Pancreas (tissue), 10 donors: ENCODE measurements at regions of chr17 and their contacts with region 1.

Region 1: GRCh38 chr17:80866147-80866793 is 125.4 kb upstream of the CHMP6 start:
- DNase-seq: peak in 4 of 6 donors; percentile 24 to 79 (median 56)
- ATAC-seq: peak; percentile 60 to 93 (median 89)
- H3K4me3 ChIP-seq: no peak overlapping the region
- H3K27ac ChIP-seq: no peak overlapping the region
- H3K4me1 ChIP-seq: no peaks in the 10 kb centered on the region
- H3K27me3 ChIP-seq: no peaks in the 10 kb centered on the region
- CTCF ChIP-seq: peak in 3 of 4 donors; percentile 35 to 53 (median 51)

Region 2: GRCh38 chr17:80732268-80732667 is 134.0 kb before region 1 on chr17:
- intact Hi-C with region 1: no loop called
- DNase-seq: no peak
- ATAC-seq: no peak
- H3K4me3 ChIP-seq: no peak overlapping the region
- H3K27ac ChIP-seq: no peak overlapping the region
- H3K4me1 ChIP-seq: no peaks in the 10 kb centered on the region
- H3K27me3 ChIP-seq: no peaks in the 10 kb centered on the region
- CTCF ChIP-seq: no peak

Region 3: DNA sequence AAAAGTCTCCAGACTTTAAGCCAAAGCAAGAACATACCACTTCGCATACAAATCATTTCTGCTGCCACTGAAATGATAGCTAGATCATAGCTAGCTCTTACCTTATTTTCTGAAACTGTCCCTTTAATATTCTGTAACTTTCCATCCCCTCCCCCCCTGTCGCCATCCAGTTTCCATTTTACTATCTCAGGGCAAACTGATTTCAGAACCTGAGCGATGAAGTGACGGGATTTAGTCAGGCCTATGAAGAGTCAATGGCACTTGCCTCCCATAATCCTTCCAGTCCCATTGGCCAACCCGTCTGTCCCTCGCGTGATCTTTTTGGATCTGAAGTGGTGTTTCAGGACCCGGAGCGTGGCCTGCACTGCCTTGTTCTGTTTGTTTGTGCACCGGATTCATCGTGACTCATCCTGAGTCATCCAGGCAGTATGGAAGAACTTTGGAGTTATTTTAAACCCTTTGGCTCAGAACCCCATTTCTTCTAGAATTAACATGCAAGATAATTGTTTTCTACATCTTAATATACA is 74.4 kb before region 1 on chr17:
- intact Hi-C with region 1: no loop called
- DNase-seq: peak in 1 of 6 donors; percentile 34
- ATAC-seq: peak in 3 of 4 donors; percentile 39 to 62 (median 53)
- H3K4me3 ChIP-seq: no peak overlapping the region
- H3K27ac ChIP-seq: peak overlapping the region in 1 of 4 donors; percentile 13
- H3K4me1 ChIP-seq: no peaks in the 10 kb centered on the region
- H3K27me3 ChIP-seq: no peaks in the 10 kb centered on the region
- CTCF ChIP-seq: no peak

Region 4: GRCh38 chr17:80970044-80970761 is 103.9 kb after region 1 on chr17:
- intact Hi-C with region 1: loop called in 1 of 3 experiments (anchors 10 kb)
- DNase-seq: peak in 1 of 6 donors; percentile 76
- ATAC-seq: peak in 3 of 4 donors; percentile 50 to 67 (median 53)
- H3K4me3 ChIP-seq: no peak overlapping the region
- H3K27ac ChIP-seq: no peak overlapping the region
- H3K4me1 ChIP-seq: peaks cover 3 to 9% (median 7%) of the 10 kb centered on the region in 3 donors
- H3K27me3 ChIP-seq: no peaks in the 10 kb centered on the region
- CTCF ChIP-seq: no peak

Region 5: GRCh38 chr17:81119223-81120148 is 253.2 kb after region 1 on chr17:
- intact Hi-C with region 1: no loop called
- DNase-seq: peak in 4 of 6 donors; percentile 37 to 79 (median 60)
- ATAC-seq: peak; percentile 17 to 49 (median 38)
- H3K4me3 ChIP-seq: no peak overlapping the region
- H3K27ac ChIP-seq: no peak overlapping the region
- H3K4me1 ChIP-seq: no peaks in the 10 kb centered on the region
- H3K27me3 ChIP-seq: no peaks in the 10 kb centered on the region
- CTCF ChIP-seq: no peak